PC-3 (cell line): ENCODE measurements at regions of chr6 and their contacts with region 1.

Region 1: DNA sequence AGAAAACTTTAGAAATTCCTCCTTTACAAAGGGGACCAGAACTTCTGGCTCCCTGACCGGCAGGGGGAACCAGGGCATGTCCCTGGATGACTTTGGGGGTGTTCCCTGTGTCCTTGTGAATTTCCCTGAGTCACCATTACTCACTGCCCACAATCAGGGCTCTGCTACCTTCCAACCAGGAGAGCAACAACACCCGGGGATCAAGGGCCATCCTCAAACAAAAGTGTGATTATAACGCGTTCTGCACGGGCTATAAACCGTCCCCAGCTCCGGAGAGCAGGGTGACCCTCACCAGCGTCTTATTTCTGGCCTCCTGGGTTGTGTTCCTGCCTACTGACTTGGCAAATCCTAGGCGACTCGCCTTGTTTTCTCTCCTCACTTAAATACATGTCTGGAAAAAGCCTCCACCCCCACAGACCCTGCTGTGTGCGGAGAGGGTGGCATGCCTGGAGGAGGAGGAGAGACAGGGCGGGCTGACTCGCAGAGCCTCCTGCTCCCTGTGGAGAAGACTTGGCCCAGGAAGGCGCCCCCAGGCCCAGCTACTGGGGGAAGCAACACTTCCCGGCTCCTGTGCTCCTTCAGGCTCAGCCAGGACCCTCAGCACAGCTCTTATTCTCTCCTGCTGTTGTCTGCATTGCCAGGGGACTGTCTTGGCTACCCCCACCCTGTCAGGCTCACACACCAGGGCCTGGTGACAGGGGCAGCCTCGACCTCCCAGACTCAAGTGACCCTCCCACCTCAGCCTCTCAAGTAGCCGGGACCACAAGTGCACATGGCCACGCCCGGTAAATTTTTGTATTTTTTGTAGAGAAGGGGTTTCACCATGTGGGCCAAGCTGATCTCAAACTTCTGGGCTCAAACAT is 54.1 kb downstream of the FGD2 start:
- DNase-seq: peak; percentile 97
- ATAC-seq: peak; percentile 71
- H3K4me3 ChIP-seq: peak overlapping the region; percentile 58; the same call in 1 of the 2 replicates
- H3K27ac ChIP-seq: peak overlapping the region; percentile 91
- H3K4me1 ChIP-seq: peaks cover 54% of the 10 kb centered on the region
- H3K27me3 ChIP-seq: no peaks in the 10 kb centered on the region
- CTCF ChIP-seq: peak; percentile 83

Region 2: GRCh38 chr6:36340618-36341454 is 718.7 kb before region 1 on chr6:
- CTCF ChIA-PET with region 1: no interaction called
- POLR2A ChIA-PET with region 1: no interaction called
- intact Hi-C with region 1: no loop called
- DNase-seq: peak; percentile 59
- ATAC-seq: peak; percentile 82
- H3K4me3 ChIP-seq: peak overlapping the region; percentile 54; the same call in 1 of the 2 replicates
- H3K27ac ChIP-seq: no peak overlapping the region
- H3K4me1 ChIP-seq: peaks cover 7% of the 10 kb centered on the region
- H3K27me3 ChIP-seq: 0 out of 2 replicates have a peak, but pooled peaks cover 7% of the 10 kb centered on the region
- CTCF ChIP-seq: peak; percentile 95

Region 3: DNA sequence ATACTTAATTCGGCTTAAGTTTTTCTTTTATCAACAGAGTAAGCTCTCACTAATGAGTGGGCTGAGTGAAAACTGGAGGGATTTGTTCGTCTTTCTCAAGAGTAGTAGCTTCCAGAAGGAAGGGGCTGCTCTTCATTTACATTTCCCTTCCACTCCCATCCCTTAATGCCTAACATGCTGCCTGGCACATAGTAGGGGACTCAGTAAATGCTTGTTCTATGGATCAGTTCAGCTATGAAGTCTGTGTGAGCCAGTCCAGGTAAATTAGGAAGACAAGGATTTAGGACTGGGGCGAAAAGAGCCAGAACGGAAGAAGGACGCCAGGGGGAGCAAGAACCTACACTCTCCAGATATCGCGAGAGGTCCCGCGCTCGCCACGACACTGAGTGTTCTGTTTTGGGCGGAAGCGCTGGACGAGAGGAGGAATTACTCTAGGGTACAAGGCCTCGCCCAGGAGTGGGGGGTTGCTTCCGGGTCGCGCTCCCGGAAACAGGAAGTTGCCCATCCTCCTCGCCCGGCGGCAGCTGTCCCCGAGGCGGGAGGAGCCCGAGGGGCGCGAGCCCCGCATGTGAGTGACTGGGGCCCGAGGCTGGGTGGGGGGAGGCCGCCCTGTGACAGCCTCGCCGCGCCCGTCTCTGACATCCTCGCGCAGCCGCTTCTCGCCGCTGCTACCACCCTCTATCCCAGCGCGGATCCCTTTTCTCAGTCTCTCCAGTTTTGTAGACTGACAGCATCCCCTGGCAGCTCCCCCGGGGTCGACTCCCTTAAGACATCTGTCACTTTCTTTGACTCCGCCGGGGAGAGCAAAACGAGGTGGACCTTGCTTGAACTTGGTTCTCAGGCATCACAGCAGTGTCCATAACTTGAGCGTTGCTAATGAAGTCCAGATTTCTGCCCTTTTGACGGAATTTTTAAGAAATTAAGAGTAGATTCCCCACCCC is 173.8 kb before region 1 on chr6 and contains the start of gene C6orf89:
- CTCF ChIA-PET with region 1: no interaction called
- POLR2A ChIA-PET with region 1: no interaction called
- intact Hi-C with region 1: no loop called
- DNase-seq: peak; percentile 98
- ATAC-seq: peak; percentile 100
- H3K4me3 ChIP-seq: peak within 1 kb of the TSS; percentile 80
- H3K27ac ChIP-seq: 0 out of 2 replicates have a peak within 1 kb of the TSS, but pooled peaks have one; percentile 10
- H3K4me1 ChIP-seq: peaks cover 11% of the 10 kb centered on the region
- H3K27me3 ChIP-seq: no peaks in the 10 kb centered on the region
- CTCF ChIP-seq: peak; percentile 86
- total RNA-seq, gene C6orf89: 23.2 and 27.8 TPM in 2 replicates

Region 4: GRCh38 chr6:37102279-37103168 is 42.9 kb after region 1 on chr6:
- CTCF ChIA-PET with region 1: interaction called, 4 read pairs
- POLR2A ChIA-PET with region 1: interaction called, 6 read pairs
- intact Hi-C with region 1: loop called (anchors 1 kb)
- DNase-seq: peak; percentile 82
- ATAC-seq: peak; percentile 66
- H3K4me3 ChIP-seq: peak overlapping the region; percentile 59
- H3K27ac ChIP-seq: peak overlapping the region; percentile 78
- H3K4me1 ChIP-seq: peaks cover 38% of the 10 kb centered on the region
- H3K27me3 ChIP-seq: no peaks in the 10 kb centered on the region
- CTCF ChIP-seq: no peak

Region 5: DNA sequence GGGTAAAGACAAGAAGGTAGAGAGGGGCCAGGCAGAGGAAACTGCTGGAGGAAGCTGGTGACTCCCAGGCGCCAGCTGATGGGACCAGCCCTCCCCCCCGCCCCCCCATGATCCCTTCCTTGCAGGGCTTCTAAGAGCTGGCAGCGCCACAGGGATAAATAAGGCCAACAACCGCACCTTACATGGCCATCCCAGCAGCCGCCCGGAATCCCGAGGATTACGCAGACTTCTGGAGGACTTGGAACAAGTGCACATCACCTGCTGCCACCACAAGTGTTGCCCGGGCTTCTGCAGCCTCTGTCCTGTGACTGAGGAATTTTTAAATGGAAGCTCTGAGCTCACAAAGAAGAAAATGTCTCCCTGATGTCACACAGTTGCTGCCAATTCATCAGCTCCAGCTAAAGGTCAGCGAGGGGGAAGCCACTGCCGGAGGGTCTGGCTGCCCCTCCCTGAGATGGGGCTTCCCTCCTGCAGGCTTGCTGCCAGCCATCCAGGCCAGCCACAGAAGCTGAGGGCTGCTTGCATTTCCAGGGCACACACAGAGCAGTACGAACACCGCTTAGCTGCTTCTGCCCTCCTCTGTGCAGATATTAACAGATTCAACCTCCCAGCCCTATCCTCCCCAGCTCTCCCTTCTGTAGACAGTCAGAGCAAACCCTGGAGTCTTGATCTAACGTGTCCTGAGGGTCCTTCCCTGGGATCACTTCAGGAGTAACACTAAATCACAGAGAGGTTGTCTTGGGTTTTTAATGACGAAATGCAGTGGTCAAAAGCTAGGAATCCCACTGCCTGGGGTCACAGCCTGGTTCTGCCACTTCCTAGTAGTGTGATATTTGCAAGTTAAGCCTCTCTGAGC is 71.8 kb after region 1 on chr6:
- CTCF ChIA-PET with region 1: interaction called, 3 read pairs
- POLR2A ChIA-PET with region 1: interaction called, 3 read pairs
- intact Hi-C with region 1: loop called (anchors 1 kb)
- DNase-seq: no peak
- ATAC-seq: no peak
- H3K4me3 ChIP-seq: no peak overlapping the region
- H3K27ac ChIP-seq: peak overlapping the region; percentile 53
- H3K4me1 ChIP-seq: peaks cover 68% of the 10 kb centered on the region
- H3K27me3 ChIP-seq: no peaks in the 10 kb centered on the region
- CTCF ChIP-seq: no peak

Region 6: GRCh38 chr6:37137201-37138090 is 77.9 kb after region 1 on chr6:
- CTCF ChIA-PET with region 1: interaction called, 3 read pairs
- POLR2A ChIA-PET with region 1: no interaction called
- intact Hi-C with region 1: loop called (anchors 1 kb)
- DNase-seq: peak; percentile 98
- ATAC-seq: peak; percentile 61
- H3K4me3 ChIP-seq: peak overlapping the region; percentile 37; the same call in 1 of the 2 replicates
- H3K27ac ChIP-seq: peak overlapping the region; percentile 99
- H3K4me1 ChIP-seq: peaks cover 69% of the 10 kb centered on the region
- H3K27me3 ChIP-seq: no peaks in the 10 kb centered on the region
- CTCF ChIP-seq: no peak